HCT116 (cell line): ENCODE measurements at regions of chr12 and their contacts with region 1.

Region 1: DNA sequence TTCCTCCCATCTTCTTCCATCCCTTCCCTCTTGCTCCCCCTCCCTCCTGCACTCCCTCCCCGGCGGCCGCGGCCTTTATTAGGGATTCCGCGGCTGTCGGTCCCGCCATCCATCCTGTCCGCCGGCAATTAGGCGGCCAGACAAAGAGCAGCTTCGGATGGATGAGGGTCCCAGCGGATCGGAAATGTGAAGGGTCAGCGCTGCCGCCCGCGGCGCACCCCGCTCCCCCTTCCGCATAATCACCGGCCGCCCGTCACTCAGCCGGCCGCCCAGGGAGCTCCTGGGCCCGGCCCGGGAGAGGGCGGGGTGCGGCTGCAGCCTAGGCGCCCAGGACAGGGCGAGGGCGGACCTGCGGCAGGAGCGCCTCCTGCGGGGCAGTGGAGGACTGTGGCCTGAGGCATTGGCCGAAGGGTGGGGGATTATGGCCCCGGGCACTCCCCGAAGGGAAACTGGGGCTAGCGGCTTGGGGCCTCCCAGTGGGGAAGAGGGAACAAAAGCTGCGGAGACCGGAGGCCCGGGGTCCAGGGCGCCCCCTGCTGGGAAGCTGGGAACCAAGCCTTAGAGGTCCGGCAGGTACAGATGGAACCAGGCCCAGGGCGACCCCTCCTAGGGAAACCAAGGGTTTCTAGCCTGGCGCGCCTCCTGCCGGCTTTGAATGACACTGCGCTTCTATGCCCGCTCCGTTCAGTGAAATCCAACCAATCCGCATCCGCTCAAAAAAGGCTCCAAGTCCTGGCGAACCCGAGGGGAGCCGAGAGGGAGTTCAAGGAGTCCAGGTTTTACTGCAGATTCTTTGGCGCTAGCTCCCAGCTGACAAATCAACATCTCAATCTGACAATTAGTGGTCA is 4.4 kb upstream of the DNAJC22 start:
- DNase-seq: peak; percentile 79
- ATAC-seq: peak; percentile 84
- H3K4me3 ChIP-seq: peak overlapping the region; percentile 35 to 47
- H3K27ac ChIP-seq: peak overlapping the region; percentile 28; the same call in 1 of the 2 replicates
- H3K4me1 ChIP-seq: peaks cover 32 to 68% of the 10 kb centered on the region in 2 experiments
- H3K27me3 ChIP-seq: no peaks in the 10 kb centered on the region
- CTCF ChIP-seq: peak in 2 of 3 experiments; percentile 79 to 86; a peak in 4 of 6 replicates
- POLR2A ChIP-seq: no peak
- RAD21 ChIP-seq: no peak

Region 2: DNA sequence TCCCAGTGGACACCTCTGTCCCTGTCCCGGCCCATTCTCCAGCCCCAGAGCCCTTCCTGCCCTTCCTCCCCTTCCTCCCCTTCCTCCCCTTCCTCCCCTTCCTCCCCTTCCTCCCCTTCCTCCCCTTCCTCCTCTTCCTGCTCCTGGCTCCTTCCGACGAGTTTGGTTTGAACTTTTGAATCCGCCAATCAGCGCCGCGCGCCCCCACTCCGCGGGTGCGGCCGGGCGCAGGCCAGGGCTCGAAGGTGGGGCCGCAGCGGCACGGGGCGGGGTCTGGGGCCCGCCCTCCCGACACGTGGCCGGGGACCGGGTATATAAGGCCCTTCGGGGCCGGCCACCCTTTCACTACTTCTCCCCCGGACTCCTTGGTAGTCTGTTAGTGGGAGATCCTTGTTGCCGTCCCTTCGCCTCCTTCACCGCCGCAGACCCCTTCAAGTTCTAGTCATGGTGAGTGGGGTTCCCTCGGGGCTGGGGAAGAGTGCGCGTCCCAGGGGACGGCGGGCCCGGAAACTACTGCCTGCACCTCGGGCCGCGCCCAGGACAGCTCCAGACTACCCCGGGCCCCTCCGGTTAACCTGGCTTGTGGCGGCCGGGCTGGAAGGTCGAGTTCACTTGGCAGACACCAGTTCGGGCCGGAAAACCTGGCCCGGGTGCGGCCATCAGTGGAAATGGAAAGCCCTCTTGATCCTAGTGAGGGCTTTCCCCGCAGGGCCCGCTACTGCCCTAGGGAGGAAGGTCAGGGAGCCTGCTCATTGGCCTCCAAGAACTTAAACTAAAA is 77.4 kb before region 1 on chr12 and contains the start of gene TUBA1C:
- CTCF ChIA-PET with region 1: interaction called, 5 read pairs
- POLR2A ChIA-PET with region 1: interaction called, 6 read pairs
- RAD21 ChIA-PET with region 1: no interaction called
- intact Hi-C with region 1: loop called (anchors 1 kb)
- DNase-seq: peak; percentile 94
- ATAC-seq: peak; percentile 85
- H3K4me3 ChIP-seq: peak within 1 kb of the TSS; percentile 88 to 98
- H3K27ac ChIP-seq: peak within 1 kb of the TSS; percentile 99
- H3K4me1 ChIP-seq: peaks cover 23 to 46% of the 10 kb centered on the region in 2 experiments
- H3K27me3 ChIP-seq: no peaks in the 10 kb centered on the region
- CTCF ChIP-seq: no peak
- POLR2A ChIP-seq: peak; percentile 98
- RAD21 ChIP-seq: no peak
- total RNA-seq, gene TUBA1C: 571 TPM

Region 3: DNA sequence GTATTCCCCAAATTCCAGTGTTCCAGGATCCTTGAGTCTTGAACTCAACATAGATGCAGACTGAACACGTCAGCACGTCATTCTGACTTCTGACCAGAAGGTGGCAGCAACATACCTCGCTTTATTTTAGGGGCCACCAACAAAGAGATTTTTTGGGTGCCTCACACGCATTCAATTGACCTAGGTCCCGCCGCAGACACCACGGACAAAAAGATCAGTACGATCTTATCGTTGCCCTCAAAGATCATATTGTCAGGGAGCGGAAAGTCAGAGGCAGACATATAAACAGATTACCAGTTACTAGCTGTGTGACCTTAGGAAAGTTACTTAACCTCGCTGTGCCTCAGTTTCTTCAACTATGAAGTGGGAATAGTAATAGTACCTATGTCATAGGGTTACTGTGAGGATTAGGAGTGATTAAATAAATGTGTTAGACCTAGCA is 53.9 kb before region 1 on chr12:
- CTCF ChIA-PET with region 1: interaction called, 44 read pairs
- POLR2A ChIA-PET with region 1: interaction called, 3 read pairs
- RAD21 ChIA-PET with region 1: interaction called in 1 of 2 experiments, 4 read pairs
- intact Hi-C with region 1: loop called (anchors 1 kb)
- DNase-seq: peak; percentile 46
- ATAC-seq: peak; percentile 74
- H3K4me3 ChIP-seq: no peak overlapping the region
- H3K27ac ChIP-seq: no peak overlapping the region
- H3K4me1 ChIP-seq: peaks cover 0 to 10% of the 10 kb centered on the region in 2 experiments; a peak in 2 of 4 replicates
- H3K27me3 ChIP-seq: no peaks in the 10 kb centered on the region
- CTCF ChIP-seq: peak; percentile 76 to 97 (median 89)
- POLR2A ChIP-seq: no peak
- RAD21 ChIP-seq: peak; percentile 92

Region 4: GRCh38 chr12:49296034-49296835 is 46.1 kb before region 1 on chr12:
- CTCF ChIA-PET with region 1: interaction called, 44 read pairs
- POLR2A ChIA-PET with region 1: interaction called, 3 read pairs
- RAD21 ChIA-PET with region 1: no interaction called
- intact Hi-C with region 1: loop called (anchors 2 kb)
- DNase-seq: no peak
- ATAC-seq: peak; percentile 71
- H3K4me3 ChIP-seq: peak overlapping the region; percentile 47 to 48
- H3K27ac ChIP-seq: no peak overlapping the region; the same call in 1 of the 2 replicates
- H3K4me1 ChIP-seq: peaks cover 10 to 35% of the 10 kb centered on the region in 2 experiments; a peak in 3 of 4 replicates
- H3K27me3 ChIP-seq: no peaks in the 10 kb centered on the region
- CTCF ChIP-seq: peak; percentile 66 to 91 (median 90)
- POLR2A ChIP-seq: no peak
- RAD21 ChIP-seq: no peak

Region 5: GRCh38 chr12:49322708-49323523 is 19.4 kb before region 1 on chr12 and contains the start of gene TROAP:
- CTCF ChIA-PET with region 1: interaction called, 30 read pairs
- POLR2A ChIA-PET with region 1: interaction called, 6 read pairs
- RAD21 ChIA-PET with region 1: interaction called in 1 of 2 experiments, 3 read pairs
- intact Hi-C with region 1: no loop called
- DNase-seq: peak; percentile 97
- ATAC-seq: peak; percentile 96
- H3K4me3 ChIP-seq: peak within 1 kb of the TSS; percentile 72 to 99
- H3K27ac ChIP-seq: peak within 1 kb of the TSS; percentile 70
- H3K4me1 ChIP-seq: peaks cover 8 to 14% of the 10 kb centered on the region in 2 experiments
- H3K27me3 ChIP-seq: no peaks in the 10 kb centered on the region
- CTCF ChIP-seq: no peak
- POLR2A ChIP-seq: peak; percentile 51
- RAD21 ChIP-seq: no peak
- total RNA-seq, gene TROAP: 99.1 TPM

Region 6: DNA sequence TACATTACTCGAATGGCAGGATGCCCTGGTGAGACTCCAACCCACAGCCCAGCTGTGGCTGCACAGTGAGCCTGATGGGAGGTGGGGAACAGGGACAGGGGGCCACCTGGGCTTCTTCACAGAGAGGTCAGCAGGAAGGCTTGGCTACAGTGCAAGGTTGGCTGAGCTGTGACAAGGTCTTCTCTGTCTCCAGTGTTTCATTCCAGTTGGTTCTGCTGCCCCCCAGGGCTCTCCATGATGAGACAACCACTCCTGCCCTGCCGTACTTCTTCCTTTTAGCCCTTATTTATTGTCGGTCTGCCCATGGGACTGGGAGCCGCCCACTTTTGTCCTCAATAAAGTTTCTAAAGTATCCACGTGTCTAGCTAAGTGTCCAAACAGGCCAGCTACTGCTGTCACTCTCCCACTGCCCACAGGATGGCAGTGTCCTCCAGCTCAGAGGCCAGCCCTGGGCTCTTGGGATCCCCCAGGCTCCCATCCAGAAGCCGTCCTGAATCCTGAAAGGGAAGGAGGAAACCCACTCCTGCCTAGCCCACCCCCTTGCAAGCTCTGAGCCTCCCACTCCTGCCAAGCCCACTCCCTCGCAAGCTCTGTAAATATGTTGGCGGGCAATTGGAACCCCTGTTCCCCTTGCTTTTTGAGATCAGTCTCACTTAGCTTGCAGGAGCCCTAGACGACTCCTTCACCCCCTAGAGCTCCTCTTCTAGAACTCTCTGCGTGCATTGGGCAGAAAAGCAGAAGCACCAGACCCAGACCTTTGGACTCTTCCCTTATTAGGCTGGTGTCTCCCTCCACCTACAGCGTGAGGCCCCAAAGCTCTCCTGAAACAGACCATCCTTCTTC is 10.7 kb before region 1 on chr12:
- CTCF ChIA-PET with region 1: interaction called, 45 read pairs
- POLR2A ChIA-PET with region 1: interaction called, 8 read pairs
- RAD21 ChIA-PET with region 1: interaction called, 4 to 6 read pairs
- intact Hi-C with region 1: no loop called
- DNase-seq: peak; percentile 43
- ATAC-seq: peak; percentile 84
- H3K4me3 ChIP-seq: no peak overlapping the region
- H3K27ac ChIP-seq: peak overlapping the region; percentile 35
- H3K4me1 ChIP-seq: peaks cover 4 to 11% of the 10 kb centered on the region in 2 experiments; a peak in 2 of 4 replicates
- H3K27me3 ChIP-seq: no peaks in the 10 kb centered on the region
- CTCF ChIP-seq: peak; percentile 79 to 87 (median 86)
- POLR2A ChIP-seq: no peak
- RAD21 ChIP-seq: peak; percentile 86

Region 7: GRCh38 chr12:49568442-49569162 is 226.3 kb after region 1 on chr12:
- CTCF ChIA-PET with region 1: no interaction called
- POLR2A ChIA-PET with region 1: no interaction called
- RAD21 ChIA-PET with region 1: no interaction called
- intact Hi-C with region 1: no loop called
- DNase-seq: peak; percentile 13
- ATAC-seq: peak; percentile 52
- H3K4me3 ChIP-seq: peak overlapping the region; percentile 98 to 100
- H3K27ac ChIP-seq: peak overlapping the region; percentile 67
- H3K4me1 ChIP-seq: peaks cover 8 to 15% of the 10 kb centered on the region in 2 experiments; a peak in 3 of 4 replicates
- H3K27me3 ChIP-seq: no peaks in the 10 kb centered on the region
- CTCF ChIP-seq: no peak
- POLR2A ChIP-seq: no peak
- RAD21 ChIP-seq: no peak